CD4-positive, alpha-beta memory T cell (primary cell): ENCODE measurements at regions of chr2 and their contacts with region 1.

Region 1: DNA sequence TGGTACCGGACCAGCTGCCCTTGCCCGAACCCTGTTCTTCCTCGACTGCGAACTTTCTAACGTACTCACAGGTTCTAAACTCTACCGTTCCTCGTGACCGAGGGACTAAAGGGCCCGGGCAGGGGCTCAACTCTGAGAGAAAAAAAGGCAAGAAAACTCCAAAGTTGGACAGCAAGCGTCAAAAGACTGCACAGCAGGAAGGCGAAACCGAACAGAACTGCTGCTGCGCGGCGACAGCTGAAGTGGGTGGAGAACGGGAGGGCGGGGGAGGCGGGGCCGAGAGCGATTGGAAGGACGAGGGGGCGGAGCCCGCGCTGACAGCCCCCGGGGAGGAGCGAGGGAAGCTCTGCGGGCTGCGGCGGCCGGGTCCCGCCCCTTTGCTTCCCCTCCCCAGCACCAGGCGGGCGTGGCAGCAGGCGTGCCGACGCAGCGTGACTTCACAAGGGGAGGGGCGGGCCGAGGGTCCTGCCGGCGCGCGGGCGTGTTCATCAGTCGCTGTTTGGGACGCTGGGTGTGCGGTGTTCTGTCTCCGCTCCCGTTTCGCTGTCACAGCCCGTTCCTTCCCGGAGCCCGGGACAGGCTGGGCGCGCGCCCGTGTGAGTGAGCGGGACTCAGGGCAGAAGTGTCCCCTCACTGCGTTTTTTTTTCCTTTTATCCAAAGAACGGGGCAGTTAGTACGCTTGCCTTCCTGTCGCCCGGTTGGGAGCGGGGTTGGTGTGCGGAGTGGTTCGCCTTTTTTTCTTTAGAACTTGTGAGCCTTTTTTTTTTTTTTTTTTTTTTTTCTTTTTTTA is at the start of gene NABP1:
- DNase-seq: peak; percentile 98 to 99 (median 98)
- H3K4me3 ChIP-seq: peak within 1 kb of the TSS; percentile 88 to 97
- H3K4me3 Mint-ChIP-seq: peak within 1 kb of the TSS; percentile 90 to 100 (median 99)
- H3K27ac ChIP-seq: peak within 1 kb of the TSS; percentile 93
- H3K27ac Mint-ChIP-seq: peak within 1 kb of the TSS; percentile 97 to 100 (median 99)
- H3K4me1 ChIP-seq: peaks cover 66% of the 10 kb centered on the region
- H3K4me1 Mint-ChIP-seq: peaks cover 37 to 80% (median 52%) of the 10 kb centered on the region in 4 donors
- H3K27me3 ChIP-seq: no peaks in the 10 kb centered on the region
- H3K27me3 Mint-ChIP-seq: no peaks in the 10 kb centered on the region
- total RNA-seq, gene NABP1: 107 to 111 TPM

Region 2: DNA sequence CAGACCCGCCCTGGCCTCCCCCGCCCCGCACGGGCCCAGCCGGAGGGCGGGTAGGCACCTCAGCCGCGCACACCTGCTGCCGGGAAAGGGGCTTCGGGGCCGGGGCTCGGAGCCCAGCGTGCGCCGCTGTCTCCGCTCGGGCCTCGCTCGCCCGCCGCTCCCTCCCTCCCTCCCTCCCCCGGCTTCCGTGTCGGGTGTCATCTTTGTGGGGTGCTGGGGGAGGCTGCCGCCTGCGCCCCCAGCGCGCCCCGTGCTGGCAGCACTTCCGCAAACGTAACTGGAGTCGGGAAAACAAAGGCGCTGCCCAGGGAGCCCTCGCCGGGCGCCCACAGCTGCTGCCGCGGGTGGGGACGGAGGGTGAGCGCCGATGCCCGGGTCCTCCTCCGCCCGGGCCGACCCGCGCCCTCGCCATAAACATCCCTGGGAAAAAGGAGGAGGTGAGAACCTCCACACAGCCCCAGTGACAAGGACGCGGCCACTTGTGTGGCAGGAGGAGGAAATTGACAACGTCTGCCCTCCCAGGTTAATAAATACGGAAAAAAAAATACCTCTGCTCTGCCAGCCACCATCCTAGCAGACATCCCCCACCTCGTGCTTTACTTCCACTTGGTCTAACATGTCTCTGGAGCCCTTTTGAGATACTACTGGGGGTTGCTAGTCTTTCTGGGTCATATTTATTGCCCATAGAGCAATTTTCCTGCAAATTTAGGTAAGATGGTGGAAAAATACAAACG is 1269.1 kb before region 1 on chr2:
- CTCF ChIA-PET with region 1: no interaction called
- POLR2A ChIA-PET with region 1: interaction called, 3 read pairs
- intact Hi-C with region 1: loop called (anchors 5 kb)
- DNase-seq: peak; percentile 78 to 86 (median 84)
- H3K4me3 ChIP-seq: peak overlapping the region; percentile 67 to 78
- H3K4me3 Mint-ChIP-seq: peak overlapping the region; percentile 89 to 95 (median 92)
- H3K27ac ChIP-seq: peak overlapping the region; percentile 96
- H3K27ac Mint-ChIP-seq: peak overlapping the region; percentile 96 to 99 (median 98)
- H3K4me1 ChIP-seq: peaks cover 54% of the 10 kb centered on the region
- H3K4me1 Mint-ChIP-seq: peaks cover 37 to 52% (median 41%) of the 10 kb centered on the region in 4 donors
- H3K27me3 ChIP-seq: no peaks in the 10 kb centered on the region
- H3K27me3 Mint-ChIP-seq: no peaks in the 10 kb centered on the region

Region 3: GRCh38 chr2:191051825-191052778 is 625.7 kb before region 1 on chr2:
- CTCF ChIA-PET with region 1: no interaction called
- POLR2A ChIA-PET with region 1: no interaction called
- intact Hi-C with region 1: loop called (anchors 5 kb)
- DNase-seq: peak in 4 of 5 donors; percentile 52 to 66 (median 62)
- H3K4me3 ChIP-seq: no peak overlapping the region
- H3K4me3 Mint-ChIP-seq: no peak overlapping the region
- H3K27ac ChIP-seq: no peak overlapping the region
- H3K27ac Mint-ChIP-seq: no peak overlapping the region
- H3K4me1 ChIP-seq: peaks cover 28% of the 10 kb centered on the region
- H3K4me1 Mint-ChIP-seq: peaks cover 15 to 23% (median 20%) of the 10 kb centered on the region in 4 donors
- H3K27me3 ChIP-seq: no peaks in the 10 kb centered on the region
- H3K27me3 Mint-ChIP-seq: no peaks in the 10 kb centered on the region

Region 4: GRCh38 chr2:191559569-191559968 is 118.3 kb before region 1 on chr2:
- CTCF ChIA-PET with region 1: no interaction called
- POLR2A ChIA-PET with region 1: no interaction called
- intact Hi-C with region 1: no loop called
- DNase-seq: no peak
- H3K4me3 ChIP-seq: no peak overlapping the region
- H3K4me3 Mint-ChIP-seq: no peak overlapping the region
- H3K27ac ChIP-seq: no peak overlapping the region
- H3K27ac Mint-ChIP-seq: no peak overlapping the region
- H3K4me1 ChIP-seq: no peaks in the 10 kb centered on the region
- H3K4me1 Mint-ChIP-seq: peaks cover 2 to 5% (median 3%) of the 10 kb centered on the region in 4 donors
- H3K27me3 ChIP-seq: peaks cover 4% of the 10 kb centered on the region
- H3K27me3 Mint-ChIP-seq: peaks cover 13 to 20% of the 10 kb centered on the region in 2 donors

Region 5: DNA sequence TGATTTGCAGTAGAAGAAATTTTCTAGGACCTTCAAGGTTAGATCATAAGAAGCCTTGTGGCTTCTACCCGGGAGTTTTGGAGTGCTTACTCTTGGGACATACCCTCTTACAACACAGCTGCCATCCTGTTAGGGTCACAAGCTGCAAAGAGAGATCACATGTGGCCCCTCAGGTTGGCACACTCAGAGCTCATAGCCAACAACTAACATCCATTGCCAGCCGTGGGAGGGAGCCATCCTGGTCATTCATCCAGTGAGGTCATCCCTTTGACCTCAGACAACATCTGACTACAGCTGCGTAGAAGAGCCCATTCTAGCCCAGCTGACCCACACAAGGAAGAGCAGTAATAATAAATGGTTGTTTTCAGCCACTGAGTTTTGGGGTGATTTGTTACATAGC is 76.8 kb before region 1 on chr2:
- CTCF ChIA-PET with region 1: no interaction called
- POLR2A ChIA-PET with region 1: interaction called, 11 read pairs
- intact Hi-C with region 1: no loop called
- DNase-seq: no peak
- H3K4me3 ChIP-seq: no peak overlapping the region
- H3K4me3 Mint-ChIP-seq: no peak overlapping the region
- H3K27ac ChIP-seq: no peak overlapping the region
- H3K27ac Mint-ChIP-seq: peak overlapping the region in 1 of 7 donors; percentile 29
- H3K4me1 ChIP-seq: no peaks in the 10 kb centered on the region
- H3K4me1 Mint-ChIP-seq: peaks cover 0 to 3% (median under 1%) of the 10 kb centered on the region in 4 donors
- H3K27me3 ChIP-seq: no peaks in the 10 kb centered on the region
- H3K27me3 Mint-ChIP-seq: peaks cover 0 to 4% of the 10 kb centered on the region in 2 donors

Region 6: GRCh38 chr2:191625016-191625415 is 52.8 kb before region 1 on chr2:
- CTCF ChIA-PET with region 1: interaction called, 8 read pairs
- POLR2A ChIA-PET with region 1: interaction called, 602 read pairs
- intact Hi-C with region 1: loop called (anchors 1 kb)
- DNase-seq: peak; percentile 66 to 87 (median 83)
- H3K4me3 ChIP-seq: no peak overlapping the region
- H3K4me3 Mint-ChIP-seq: peak overlapping the region in 6 of 8 donors; percentile 31 to 68 (median 58)
- H3K27ac ChIP-seq: peak overlapping the region; percentile 48
- H3K27ac Mint-ChIP-seq: peak overlapping the region; percentile 77 to 97 (median 91)
- H3K4me1 ChIP-seq: peaks cover 71% of the 10 kb centered on the region
- H3K4me1 Mint-ChIP-seq: peaks cover 46 to 90% (median 68%) of the 10 kb centered on the region in 4 donors
- H3K27me3 ChIP-seq: no peaks in the 10 kb centered on the region
- H3K27me3 Mint-ChIP-seq: no peaks in the 10 kb centered on the region

Region 7: DNA sequence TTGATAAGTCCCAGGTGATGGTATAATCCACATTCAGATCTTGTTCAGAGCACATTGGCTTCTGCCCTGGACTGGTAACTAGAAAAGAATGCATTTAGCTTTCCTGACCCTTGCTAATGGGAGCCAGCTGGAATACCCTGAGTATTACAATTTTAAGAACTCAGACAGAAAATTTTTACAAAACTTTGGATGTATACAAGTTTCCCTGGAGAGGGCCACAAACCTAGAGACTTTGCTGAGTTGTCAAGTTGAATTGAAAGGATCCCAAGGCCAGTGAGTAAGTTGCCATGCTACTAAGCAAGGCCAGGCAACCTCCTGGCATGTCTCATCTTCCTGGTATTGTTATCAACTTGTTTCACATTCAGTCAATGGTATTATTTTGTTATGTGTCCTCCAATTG is 19.9 kb before region 1 on chr2:
- CTCF ChIA-PET with region 1: interaction called, 3 read pairs
- POLR2A ChIA-PET with region 1: interaction called, 35 read pairs
- intact Hi-C with region 1: loop called (anchors 2 kb)
- DNase-seq: no peak
- H3K4me3 ChIP-seq: no peak overlapping the region
- H3K4me3 Mint-ChIP-seq: no peak overlapping the region
- H3K27ac ChIP-seq: no peak overlapping the region
- H3K27ac Mint-ChIP-seq: no peak overlapping the region
- H3K4me1 ChIP-seq: no peaks in the 10 kb centered on the region
- H3K4me1 Mint-ChIP-seq: peaks cover 0 to 3% (median 0%) of the 10 kb centered on the region in 4 donors
- H3K27me3 ChIP-seq: no peaks in the 10 kb centered on the region
- H3K27me3 Mint-ChIP-seq: no peaks in the 10 kb centered on the region

Region 8: DNA sequence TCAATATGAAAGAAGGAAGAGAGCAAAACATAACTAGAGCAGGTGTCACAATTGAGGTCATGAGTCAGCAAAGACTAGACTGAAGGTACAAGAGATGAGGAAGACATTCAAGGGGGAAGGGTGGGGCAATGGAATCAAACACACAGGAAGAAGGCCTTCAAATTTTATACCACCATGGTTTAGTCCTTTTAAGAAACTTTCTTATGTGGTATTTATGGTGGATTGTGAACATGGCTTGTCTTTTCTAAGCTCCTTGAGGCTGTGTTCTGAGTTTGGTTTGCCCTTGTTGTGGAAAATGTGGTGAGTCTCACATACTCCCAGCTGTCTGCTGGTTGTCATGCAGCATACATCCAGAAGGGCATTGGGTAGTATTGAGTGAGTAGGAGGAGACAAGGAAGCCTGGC is 62.2 kb after region 1 on chr2:
- CTCF ChIA-PET with region 1: no interaction called
- POLR2A ChIA-PET with region 1: interaction called, 6 read pairs
- intact Hi-C with region 1: loop called (anchors 1 kb)
- DNase-seq: peak; percentile 77 to 84 (median 84)
- H3K4me3 ChIP-seq: no peak overlapping the region
- H3K4me3 Mint-ChIP-seq: peak overlapping the region in 6 of 8 donors; percentile 0 to 31 (median 18)
- H3K27ac ChIP-seq: no peak overlapping the region
- H3K27ac Mint-ChIP-seq: peak overlapping the region; percentile 48 to 91 (median 82)
- H3K4me1 ChIP-seq: peaks cover 21% of the 10 kb centered on the region
- H3K4me1 Mint-ChIP-seq: peaks cover 10 to 14% (median 12%) of the 10 kb centered on the region in 4 donors
- H3K27me3 ChIP-seq: no peaks in the 10 kb centered on the region
- H3K27me3 Mint-ChIP-seq: peaks cover 2 to 3% of the 10 kb centered on the region in 2 donors

Region 9: DNA sequence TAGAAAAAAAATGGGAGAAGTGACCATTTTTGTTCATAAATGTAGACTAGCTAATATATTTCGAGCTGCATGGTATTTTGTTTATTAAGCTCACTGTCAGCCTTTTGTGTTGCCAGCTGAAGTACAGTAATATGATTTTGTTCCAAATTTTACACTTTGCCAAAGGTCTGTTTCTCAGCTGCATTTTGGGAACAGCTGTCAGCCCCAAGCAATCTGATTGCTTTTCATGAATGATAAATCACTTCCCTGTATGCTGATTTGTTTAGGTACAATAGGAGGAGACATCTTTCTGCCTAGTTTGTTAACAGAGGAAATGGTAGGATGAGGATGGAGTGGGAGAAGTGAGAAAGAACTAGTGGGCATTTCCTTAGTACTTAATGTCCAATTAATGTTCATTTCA is 79.4 kb after region 1 on chr2:
- CTCF ChIA-PET with region 1: no interaction called
- POLR2A ChIA-PET with region 1: no interaction called
- intact Hi-C with region 1: no loop called
- DNase-seq: no peak
- H3K4me3 ChIP-seq: no peak overlapping the region
- H3K4me3 Mint-ChIP-seq: no peak overlapping the region
- H3K27ac ChIP-seq: no peak overlapping the region
- H3K27ac Mint-ChIP-seq: no peak overlapping the region
- H3K4me1 ChIP-seq: peaks cover 11% of the 10 kb centered on the region
- H3K4me1 Mint-ChIP-seq: peaks cover 4 to 6% (median 5%) of the 10 kb centered on the region in 4 donors
- H3K27me3 ChIP-seq: peaks cover 3% of the 10 kb centered on the region
- H3K27me3 Mint-ChIP-seq: peaks cover 8 to 14% of the 10 kb centered on the region in 2 donors

Region 10: GRCh38 chr2:191922736-191923651 is 245.2 kb after region 1 on chr2:
- CTCF ChIA-PET with region 1: no interaction called
- POLR2A ChIA-PET with region 1: no interaction called
- intact Hi-C with region 1: no loop called
- DNase-seq: no peak
- H3K4me3 ChIP-seq: no peak overlapping the region
- H3K4me3 Mint-ChIP-seq: no peak overlapping the region
- H3K27ac ChIP-seq: no peak overlapping the region
- H3K27ac Mint-ChIP-seq: no peak overlapping the region
- H3K4me1 ChIP-seq: no peaks in the 10 kb centered on the region
- H3K4me1 Mint-ChIP-seq: no peaks in the 10 kb centered on the region
- H3K27me3 ChIP-seq: no peaks in the 10 kb centered on the region
- H3K27me3 Mint-ChIP-seq: peaks cover 0 to 4% of the 10 kb centered on the region in 2 donors

Region 11: GRCh38 chr2:192004188-192004963 is 326.5 kb after region 1 on chr2:
- CTCF ChIA-PET with region 1: no interaction called
- POLR2A ChIA-PET with region 1: no interaction called
- intact Hi-C with region 1: no loop called
- DNase-seq: no peak
- H3K4me3 ChIP-seq: no peak overlapping the region
- H3K4me3 Mint-ChIP-seq: no peak overlapping the region
- H3K27ac ChIP-seq: no peak overlapping the region
- H3K27ac Mint-ChIP-seq: no peak overlapping the region
- H3K4me1 ChIP-seq: no peaks in the 10 kb centered on the region
- H3K4me1 Mint-ChIP-seq: no peaks in the 10 kb centered on the region
- H3K27me3 ChIP-seq: no peaks in the 10 kb centered on the region
- H3K27me3 Mint-ChIP-seq: peaks cover 7 to 9% of the 10 kb centered on the region in 2 donors